ENCODE measurements at regions of chr12 and their contacts with region 1.

Region 1: DNA sequence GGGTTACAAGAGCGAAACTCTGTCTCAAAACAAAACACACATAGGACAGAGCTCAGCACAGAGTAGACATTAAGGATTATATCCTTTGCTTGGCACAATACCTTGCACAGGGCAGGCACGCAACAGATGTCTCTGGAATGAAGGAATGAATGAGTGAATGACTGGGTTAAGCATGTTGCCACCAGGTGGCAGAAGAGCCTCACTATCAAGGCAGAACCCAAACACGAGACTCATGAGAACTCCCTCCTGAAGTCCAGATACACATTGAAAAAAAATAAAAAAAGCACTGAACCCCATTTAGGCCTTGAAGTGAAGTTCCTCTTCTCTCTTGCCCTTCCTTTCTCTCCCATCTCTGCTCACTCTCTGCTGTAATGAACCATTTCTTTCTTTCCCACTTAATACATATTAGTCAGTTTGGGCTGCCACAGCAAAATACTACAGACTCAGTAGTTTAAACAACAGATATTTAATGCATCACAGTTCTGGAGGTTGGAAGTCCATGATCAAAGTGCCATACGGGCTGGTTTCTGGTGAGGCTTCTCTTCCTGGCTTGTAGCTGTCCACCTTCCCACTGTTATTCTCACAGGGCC is 26.6 kb upstream of the LTA4H start:
- DNase-seq: peak; percentile 71
- H3K4me3 ChIP-seq: no peak overlapping the region
- H3K27ac ChIP-seq: no peak overlapping the region
- H3K4me1 ChIP-seq: no peaks in the 10 kb centered on the region
- H3K27me3 ChIP-seq: no peaks in the 10 kb centered on the region
- CTCF ChIP-seq: peak; percentile 84 to 86 (median 84)
- POLR2A ChIP-seq: no peak

Region 2: DNA sequence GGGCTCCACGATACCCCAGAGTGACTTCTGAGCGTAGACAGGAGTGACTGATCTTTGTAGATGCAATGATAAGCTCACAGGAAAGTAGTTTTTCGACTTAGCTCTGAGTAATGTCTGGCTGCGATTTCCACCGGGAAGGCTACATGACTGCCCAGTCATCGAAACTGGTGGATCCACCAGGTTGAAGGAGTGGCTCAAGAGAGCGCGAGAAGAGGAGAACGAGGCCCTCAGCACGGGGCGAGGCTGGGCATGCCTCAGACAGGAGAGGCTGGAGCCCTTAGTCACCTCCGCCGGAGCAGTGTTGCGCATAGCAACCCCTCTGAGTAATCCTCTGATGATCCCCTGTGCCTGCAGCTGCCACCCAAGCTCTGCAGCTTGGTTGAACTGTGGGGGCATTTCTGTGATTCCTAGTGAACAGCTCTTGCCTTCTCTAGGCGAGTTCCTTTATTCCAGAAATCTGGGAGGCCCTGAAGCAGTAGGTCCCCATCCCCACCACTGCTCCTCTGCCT is 157.8 kb after region 1 on chr12:
- intact Hi-C with region 1: loop called (anchors 2 kb)
- DNase-seq: no peak
- H3K4me3 ChIP-seq: no peak overlapping the region
- H3K27ac ChIP-seq: no peak overlapping the region
- H3K4me1 ChIP-seq: no peaks in the 10 kb centered on the region
- H3K27me3 ChIP-seq: no peaks in the 10 kb centered on the region
- CTCF ChIP-seq: no peak
- POLR2A ChIP-seq: no peak

Measured in prostate gland (tissue), 2 donors.